Sciatic nerve (tissue), 2 donors: ENCODE measurements at regions of chr18 and their contacts with region 1.

Region 1: GRCh38 chr18:8283891-8284585 is 325.2 kb upstream of the RAB12 start:
- DNase-seq: no peak
- ATAC-seq: no peak

Region 2: GRCh38 chr18:8330575-8330974 is 46.5 kb after region 1 on chr18:
- intact Hi-C with region 1: loop called (anchors 1 kb)
- DNase-seq: no peak
- ATAC-seq: no peak